Activated CD4-positive, alpha-beta memory T cell treated with anti-CD3 and anti-CD28 coated beads for 36 hours (primary cell): ENCODE measurements at regions of chr7 and their contacts with region 1.

Region 1: DNA sequence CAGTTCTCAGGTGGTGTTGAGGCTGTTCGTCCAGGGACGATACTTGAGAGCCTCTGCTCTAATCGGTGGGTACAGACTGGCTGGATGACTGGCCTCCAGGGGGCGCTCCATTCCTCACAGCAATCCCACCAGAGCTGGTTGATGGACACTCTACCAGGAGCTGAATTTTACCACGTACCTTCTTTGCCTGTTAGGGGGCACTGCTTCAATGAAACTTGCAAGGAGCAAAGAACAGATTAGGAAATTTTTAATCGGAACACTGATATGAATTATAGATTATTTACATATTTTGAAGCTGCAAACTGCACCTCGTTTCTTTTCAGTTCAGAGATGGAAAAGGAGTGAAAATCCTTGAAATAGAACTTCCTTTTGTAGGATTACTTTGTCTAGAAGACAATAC is 44.9 kb downstream of the KBTBD2 start:
- DNase-seq: peak; percentile 94
- H3K4me3 Mint-ChIP-seq: no peak overlapping the region
- H3K27ac Mint-ChIP-seq: no peak overlapping the region
- H3K4me1 Mint-ChIP-seq: peaks cover 7% of the 10 kb centered on the region
- H3K27me3 Mint-ChIP-seq: peaks cover 24% of the 10 kb centered on the region

Region 2: GRCh38 chr7:31082447-31082846 is 1764.3 kb before region 1 on chr7:
- CTCF ChIA-PET with region 1: no interaction called
- POLR2A ChIA-PET with region 1: no interaction called
- intact Hi-C with region 1: no loop called
- DNase-seq: no peak
- H3K4me3 Mint-ChIP-seq: no peak overlapping the region
- H3K27ac Mint-ChIP-seq: no peak overlapping the region
- H3K4me1 Mint-ChIP-seq: peaks cover 2% of the 10 kb centered on the region
- H3K27me3 Mint-ChIP-seq: peaks cover 2% of the 10 kb centered on the region

Region 3: DNA sequence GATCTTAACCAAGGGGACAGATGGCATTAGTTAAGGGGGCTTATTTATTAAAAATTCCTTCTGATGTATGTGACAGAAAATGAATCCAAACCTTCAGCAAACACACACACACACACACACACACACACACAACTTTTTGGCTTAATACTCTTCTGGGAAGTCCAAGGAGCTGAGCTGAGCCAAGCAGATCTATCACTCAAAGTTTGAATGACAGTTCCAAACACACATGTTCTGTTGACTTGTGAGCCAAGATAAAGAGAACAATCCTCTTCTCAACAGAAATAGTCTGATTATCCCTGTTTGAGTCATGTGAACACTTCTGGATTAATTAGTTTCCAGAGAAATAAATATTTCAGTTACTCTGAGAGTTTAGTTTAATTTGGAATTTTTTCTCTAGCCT is 13.4 kb after region 1 on chr7:
- CTCF ChIA-PET with region 1: interaction called, 12 read pairs
- POLR2A ChIA-PET with region 1: no interaction called
- intact Hi-C with region 1: no loop called
- DNase-seq: no peak
- H3K4me3 Mint-ChIP-seq: no peak overlapping the region
- H3K27ac Mint-ChIP-seq: no peak overlapping the region
- H3K4me1 Mint-ChIP-seq: peaks cover 13% of the 10 kb centered on the region
- H3K27me3 Mint-ChIP-seq: peaks cover 3% of the 10 kb centered on the region

Region 4: DNA sequence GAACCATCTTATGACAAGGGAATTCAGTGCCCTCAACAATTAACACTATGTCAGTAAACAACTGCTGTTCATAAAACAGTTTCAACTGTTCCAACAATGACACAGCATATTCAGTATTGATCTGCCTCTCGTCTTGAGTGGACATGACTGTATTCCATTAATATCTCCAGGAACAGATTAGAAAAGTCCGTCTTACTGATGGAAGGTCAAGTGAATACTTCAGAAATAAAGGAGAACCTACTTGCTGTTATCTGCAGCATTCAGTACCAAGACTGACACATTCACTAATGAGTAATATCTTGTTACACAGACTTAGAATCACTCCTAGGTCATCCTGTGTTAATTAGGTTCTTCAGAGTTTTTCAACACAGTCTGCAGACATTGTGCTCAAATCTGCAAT is 32.8 kb after region 1 on chr7:
- CTCF ChIA-PET with region 1: interaction called, 10 read pairs
- POLR2A ChIA-PET with region 1: no interaction called
- intact Hi-C with region 1: no loop called
- DNase-seq: no peak
- H3K4me3 Mint-ChIP-seq: no peak overlapping the region
- H3K27ac Mint-ChIP-seq: peak overlapping the region; percentile 0
- H3K4me1 Mint-ChIP-seq: peaks cover 49% of the 10 kb centered on the region
- H3K27me3 Mint-ChIP-seq: no peaks in the 10 kb centered on the region

Region 5: GRCh38 chr7:32905175-32905662 is 58.5 kb after region 1 on chr7:
- CTCF ChIA-PET with region 1: interaction called, 19 read pairs
- POLR2A ChIA-PET with region 1: no interaction called
- intact Hi-C with region 1: loop called (anchors 1 kb)
- DNase-seq: peak; percentile 89
- H3K4me3 Mint-ChIP-seq: peak overlapping the region; percentile 73
- H3K27ac Mint-ChIP-seq: peak overlapping the region; percentile 93
- H3K4me1 Mint-ChIP-seq: peaks cover 17% of the 10 kb centered on the region
- H3K27me3 Mint-ChIP-seq: no peaks in the 10 kb centered on the region

Region 6: GRCh38 chr7:32942786-32943653 is 96.3 kb after region 1 on chr7:
- CTCF ChIA-PET with region 1: interaction called, 92 read pairs
- POLR2A ChIA-PET with region 1: no interaction called
- intact Hi-C with region 1: loop called (anchors 1 kb)
- DNase-seq: peak; percentile 82
- H3K4me3 Mint-ChIP-seq: peak overlapping the region; percentile 72
- H3K27ac Mint-ChIP-seq: no peak overlapping the region
- H3K4me1 Mint-ChIP-seq: peaks cover 10% of the 10 kb centered on the region
- H3K27me3 Mint-ChIP-seq: peaks cover 3% of the 10 kb centered on the region

Region 7: GRCh38 chr7:33040803-33041516 is 194.3 kb after region 1 on chr7:
- CTCF ChIA-PET with region 1: interaction called, 17 read pairs
- POLR2A ChIA-PET with region 1: no interaction called
- intact Hi-C with region 1: no loop called
- DNase-seq: peak; percentile 74
- H3K4me3 Mint-ChIP-seq: peak overlapping the region; percentile 58
- H3K27ac Mint-ChIP-seq: peak overlapping the region; percentile 78
- H3K4me1 Mint-ChIP-seq: peaks cover 60% of the 10 kb centered on the region
- H3K27me3 Mint-ChIP-seq: no peaks in the 10 kb centered on the region

Region 8: GRCh38 chr7:33109005-33109757 is 262.5 kb after region 1 on chr7 and contains the start of gene RP9:
- CTCF ChIA-PET with region 1: interaction called, 56 read pairs
- POLR2A ChIA-PET with region 1: interaction called, 3 read pairs
- intact Hi-C with region 1: loop called (anchors 1 kb)
- DNase-seq: peak; percentile 83
- H3K4me3 Mint-ChIP-seq: peak within 1 kb of the TSS; percentile 90
- H3K27ac Mint-ChIP-seq: peak within 1 kb of the TSS; percentile 40
- H3K4me1 Mint-ChIP-seq: peaks cover 36% of the 10 kb centered on the region
- H3K27me3 Mint-ChIP-seq: peaks cover 2% of the 10 kb centered on the region
- total RNA-seq, gene RP9: 11.6 to 14.0 TPM